Activated CD4-positive, alpha-beta T cell treated with anti-CD3 and anti-CD28 coated beads for 36 hours (primary cell): ENCODE measurements at regions of chr2 and their contacts with region 1.

Region 1: DNA sequence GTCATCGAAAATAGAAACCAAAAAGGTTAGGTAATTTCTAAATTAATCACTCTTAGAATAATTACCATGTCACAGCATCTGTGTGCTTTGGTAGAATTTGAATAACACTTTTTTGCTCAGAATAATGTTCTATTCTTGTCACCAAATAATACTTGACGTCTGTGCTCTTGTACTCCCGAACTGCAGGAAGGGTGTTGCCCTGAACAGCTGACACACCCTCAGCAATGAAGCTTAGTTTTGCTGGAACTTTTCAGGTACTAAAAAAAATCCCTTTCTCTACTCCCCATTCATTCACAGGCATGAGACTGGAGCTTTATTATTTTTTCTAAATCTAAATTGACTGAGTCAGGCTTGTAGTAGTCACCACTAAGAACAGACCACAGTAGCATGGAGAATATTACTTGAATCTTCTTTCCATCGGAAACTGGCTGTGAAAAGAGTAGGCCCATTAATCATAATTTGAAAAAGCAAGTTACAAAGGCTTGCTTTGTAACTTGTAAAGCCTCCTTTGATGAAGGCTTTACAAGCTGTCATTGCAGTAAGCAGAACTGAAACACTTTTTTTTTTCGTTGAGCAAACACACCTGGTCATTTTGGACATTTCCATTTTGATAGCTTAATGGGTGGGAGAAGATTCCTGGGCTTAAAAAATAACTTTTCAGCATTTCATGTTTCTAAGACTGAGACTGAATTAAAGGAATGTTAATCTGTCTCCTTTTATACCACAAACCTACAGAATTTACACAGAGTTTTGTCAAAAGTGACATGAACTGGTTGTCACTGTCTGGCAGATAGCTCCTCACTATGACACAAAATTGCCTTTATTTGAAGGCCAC is 70.3 kb upstream of the PELI1 start:
- DNase-seq: peak; percentile 57
- ATAC-seq: peak; percentile 67
- H3K4me3 Mint-ChIP-seq: peak overlapping the region; percentile 64
- H3K27ac Mint-ChIP-seq: peak overlapping the region; percentile 97
- H3K4me1 Mint-ChIP-seq: peaks cover 64% of the 10 kb centered on the region
- H3K27me3 Mint-ChIP-seq: no peaks in the 10 kb centered on the region

Region 2: GRCh38 chr2:63588385-63589147 is 625.9 kb before region 1 on chr2 and contains the starts of genes MDH1 and WDPCP:
- CTCF ChIA-PET with region 1: no interaction called
- POLR2A ChIA-PET with region 1: no interaction called
- intact Hi-C with region 1: loop called in 1 of 2 experiments (anchors 5 kb)
- DNase-seq: peak; percentile 96
- ATAC-seq: peak; percentile 92
- H3K4me3 Mint-ChIP-seq: peak within 1 kb of the TSS; percentile 100
- H3K27ac Mint-ChIP-seq: peak within 1 kb of the TSS; percentile 97
- H3K4me1 Mint-ChIP-seq: peaks cover 36% of the 10 kb centered on the region
- H3K27me3 Mint-ChIP-seq: no peaks in the 10 kb centered on the region
- total RNA-seq, gene MDH1: 212 to 265 TPM
- total RNA-seq, gene WDPCP: 6.5 to 8.2 TPM

Region 3: GRCh38 chr2:64052468-64053241 is 161.8 kb before region 1 on chr2:
- CTCF ChIA-PET with region 1: interaction called, 6 read pairs
- POLR2A ChIA-PET with region 1: no interaction called
- intact Hi-C with region 1: loop called in 1 of 2 experiments (anchors 1 kb)
- DNase-seq: no peak
- ATAC-seq: no peak
- H3K4me3 Mint-ChIP-seq: no peak overlapping the region
- H3K27ac Mint-ChIP-seq: no peak overlapping the region
- H3K4me1 Mint-ChIP-seq: peaks cover 40% of the 10 kb centered on the region
- H3K27me3 Mint-ChIP-seq: no peaks in the 10 kb centered on the region

Region 4: GRCh38 chr2:64133828-64134227 is 80.7 kb before region 1 on chr2:
- CTCF ChIA-PET with region 1: interaction called, 8 read pairs
- POLR2A ChIA-PET with region 1: interaction called, 5 read pairs
- intact Hi-C with region 1: loop called (anchors 1 to 2 kb)
- DNase-seq: no peak
- ATAC-seq: peak; percentile 71
- H3K4me3 Mint-ChIP-seq: peak overlapping the region; percentile 11
- H3K27ac Mint-ChIP-seq: peak overlapping the region; percentile 72
- H3K4me1 Mint-ChIP-seq: peaks cover 87% of the 10 kb centered on the region
- H3K27me3 Mint-ChIP-seq: no peaks in the 10 kb centered on the region

Region 5: DNA sequence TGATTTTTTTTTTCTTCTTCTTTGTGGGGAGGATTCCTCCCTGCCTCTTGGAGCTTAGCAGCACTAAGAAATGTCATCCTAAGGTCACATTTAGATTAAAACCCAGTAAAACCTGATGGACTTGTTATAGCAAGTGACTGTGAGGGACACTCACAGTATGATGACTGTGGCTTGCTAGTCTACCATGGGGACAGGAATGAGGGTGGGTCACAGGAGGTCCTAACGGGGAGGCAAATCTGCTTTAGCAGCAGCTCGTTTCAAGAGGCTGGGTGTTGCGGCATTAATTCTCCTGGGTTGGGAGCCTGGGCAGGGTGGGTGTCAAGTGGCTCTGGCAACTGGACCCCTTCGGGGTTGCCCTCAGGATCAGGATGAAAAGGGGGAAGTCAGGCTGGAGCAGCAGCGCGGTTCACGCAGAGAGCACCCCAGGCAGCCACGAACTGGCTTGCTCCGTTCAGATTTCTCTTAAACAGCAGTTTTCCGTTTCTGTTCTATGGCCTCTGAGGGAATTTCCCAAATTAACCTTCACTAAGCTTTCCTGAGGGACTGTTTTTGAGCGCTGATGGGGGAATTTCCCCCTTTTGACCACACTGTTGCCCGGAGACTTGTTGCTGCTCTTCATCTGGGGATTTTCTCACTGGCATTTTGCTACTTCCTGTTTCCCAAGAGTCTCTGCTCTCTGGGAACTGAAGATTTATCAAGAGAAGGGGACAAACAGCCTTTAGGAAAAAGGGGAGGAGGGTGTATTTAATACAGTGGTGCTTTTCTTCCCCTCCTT is 10.5 kb before region 1 on chr2:
- CTCF ChIA-PET with region 1: interaction called, 12 read pairs
- POLR2A ChIA-PET with region 1: interaction called, 9 read pairs
- intact Hi-C with region 1: loop called (anchors 1 kb)
- DNase-seq: peak; percentile 59
- ATAC-seq: peak; percentile 53
- H3K4me3 Mint-ChIP-seq: peak overlapping the region; percentile 65
- H3K27ac Mint-ChIP-seq: peak overlapping the region; percentile 93
- H3K4me1 Mint-ChIP-seq: peaks cover 72% of the 10 kb centered on the region
- H3K27me3 Mint-ChIP-seq: no peaks in the 10 kb centered on the region

Region 6: GRCh38 chr2:64609227-64609941 is 394.9 kb after region 1 on chr2:
- CTCF ChIA-PET with region 1: no interaction called
- POLR2A ChIA-PET with region 1: no interaction called
- intact Hi-C with region 1: loop called in 1 of 2 experiments (anchors 2 kb)
- DNase-seq: peak; percentile 82
- ATAC-seq: peak; percentile 61
- H3K4me3 Mint-ChIP-seq: peak overlapping the region; percentile 65
- H3K27ac Mint-ChIP-seq: no peak overlapping the region
- H3K4me1 Mint-ChIP-seq: peaks cover 25% of the 10 kb centered on the region
- H3K27me3 Mint-ChIP-seq: no peaks in the 10 kb centered on the region

Region 7: GRCh38 chr2:64698668-64699444 is 484.4 kb after region 1 on chr2:
- CTCF ChIA-PET with region 1: no interaction called
- POLR2A ChIA-PET with region 1: no interaction called
- intact Hi-C with region 1: loop called in 1 of 2 experiments (anchors 5 kb)
- DNase-seq: no peak
- ATAC-seq: peak; percentile 89
- H3K4me3 Mint-ChIP-seq: no peak overlapping the region
- H3K27ac Mint-ChIP-seq: peak overlapping the region; percentile 70
- H3K4me1 Mint-ChIP-seq: peaks cover 54% of the 10 kb centered on the region
- H3K27me3 Mint-ChIP-seq: no peaks in the 10 kb centered on the region

Region 8: DNA sequence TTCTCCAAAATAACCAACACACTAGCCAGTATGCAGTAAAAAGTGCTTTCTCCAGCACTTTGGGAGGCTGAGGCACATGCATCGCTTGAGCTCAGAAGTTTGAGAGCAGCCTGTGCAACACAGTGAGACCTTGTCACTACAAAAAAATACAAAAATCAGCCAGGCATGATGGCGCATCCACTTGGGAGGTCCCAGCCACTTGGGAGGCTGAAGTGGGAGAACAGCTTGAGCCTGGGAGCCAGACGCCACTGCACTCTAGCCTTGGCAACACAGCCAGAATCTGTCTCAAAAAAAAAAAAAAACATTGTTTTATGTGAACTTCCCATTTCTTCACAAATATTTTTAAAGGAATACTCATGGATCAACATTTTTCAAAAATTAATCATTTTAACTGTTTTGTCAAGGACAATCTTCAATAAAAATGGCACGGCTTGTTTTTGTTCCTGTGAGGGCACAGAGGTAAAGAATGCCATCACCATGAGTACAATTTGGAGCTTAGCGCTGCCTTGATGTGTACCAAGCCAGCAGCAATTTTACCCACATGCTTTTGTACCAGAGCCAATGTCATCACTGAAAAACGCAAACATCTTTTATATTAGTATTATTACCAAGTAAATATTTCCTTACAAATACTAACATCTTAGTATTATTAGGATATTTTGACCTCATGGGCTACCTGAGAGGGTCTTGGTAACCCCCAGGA is 888.7 kb after region 1 on chr2:
- CTCF ChIA-PET with region 1: no interaction called
- POLR2A ChIA-PET with region 1: no interaction called
- intact Hi-C with region 1: no loop called
- DNase-seq: no peak
- ATAC-seq: no peak
- H3K4me3 Mint-ChIP-seq: no peak overlapping the region
- H3K27ac Mint-ChIP-seq: no peak overlapping the region
- H3K4me1 Mint-ChIP-seq: peaks cover 11% of the 10 kb centered on the region
- H3K27me3 Mint-ChIP-seq: no peaks in the 10 kb centered on the region

Region 9: GRCh38 chr2:65630643-65631042 is 1416.1 kb after region 1 on chr2:
- CTCF ChIA-PET with region 1: no interaction called
- POLR2A ChIA-PET with region 1: no interaction called
- intact Hi-C with region 1: no loop called
- DNase-seq: no peak
- ATAC-seq: no peak
- H3K4me3 Mint-ChIP-seq: no peak overlapping the region
- H3K27ac Mint-ChIP-seq: no peak overlapping the region
- H3K4me1 Mint-ChIP-seq: no peaks in the 10 kb centered on the region
- H3K27me3 Mint-ChIP-seq: peaks cover 4% of the 10 kb centered on the region